HEK293 (cell line): ENCODE measurements at regions of chr5 and their contacts with region 1.

Region 1: GRCh38 chr5:90474235-90475109 is at the starts of genes MBLAC2 and POLR3G:
- H3K4me3 ChIP-seq: peak within 1 kb of the TSS; percentile 73
- H3K27ac ChIP-seq: peak within 1 kb of the TSS; percentile 76
- H3K4me1 ChIP-seq: no peaks in the 10 kb centered on the region
- CTCF ChIP-seq: peak; percentile 99

Region 2: DNA sequence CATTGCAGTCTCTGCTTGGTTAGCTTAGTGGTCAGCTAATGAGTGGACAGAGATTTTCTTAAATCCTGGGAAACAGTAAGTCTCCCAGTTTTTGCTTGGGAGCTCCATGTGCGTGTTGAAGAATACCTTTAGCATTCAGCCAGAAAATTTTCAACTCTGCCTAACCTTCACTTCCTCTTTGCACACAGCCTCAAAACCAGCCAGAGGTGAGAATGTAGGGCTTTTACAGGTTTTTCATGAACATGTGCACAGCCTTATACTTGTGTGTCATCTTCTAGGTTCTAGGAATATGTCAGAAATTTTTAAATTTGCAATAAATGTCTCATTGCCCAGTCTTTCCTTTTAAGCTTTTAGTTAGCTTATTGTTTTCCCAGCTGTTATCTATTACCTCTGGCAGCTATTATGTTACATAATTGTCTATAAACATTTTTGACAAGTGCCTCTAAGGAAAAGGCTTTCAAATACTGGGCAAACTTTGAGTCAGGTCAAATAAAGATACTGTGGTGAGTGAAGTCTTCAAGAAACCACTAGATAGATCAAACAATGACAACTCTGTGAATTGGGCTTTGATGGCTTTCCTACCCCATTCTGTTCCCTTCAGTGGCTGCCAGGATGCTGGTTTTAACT is 96.8 kb after region 1 on chr5:
- CTCF ChIA-PET with region 1: interaction called, 11 read pairs
- POLR2A ChIA-PET with region 1: no interaction called
- H3K4me3 ChIP-seq: no peak overlapping the region
- H3K27ac ChIP-seq: peak overlapping the region; percentile 54
- H3K4me1 ChIP-seq: peaks cover 22% of the 10 kb centered on the region; the same call in 1 of the 2 replicates
- CTCF ChIP-seq: no peak